Aorta (tissue), 5 donors: ENCODE measurements at regions of chr2 and their contacts with region 1.

Region 1: GRCh38 chr2:205925373-205926337 is 160.3 kb downstream of the INO80D start:
- DNase-seq: peak; percentile 81 to 95
- ATAC-seq: peak; percentile 89
- H3K4me3 ChIP-seq: no peak overlapping the region
- H3K27ac ChIP-seq: no peak overlapping the region
- H3K4me1 ChIP-seq: no peaks in the 10 kb centered on the region
- H3K27me3 ChIP-seq: no peaks in the 10 kb centered on the region

Region 2: GRCh38 chr2:204325468-204325867 is 1600.2 kb before region 1 on chr2:
- intact Hi-C with region 1: loop called in 1 of 2 experiments (anchors 10 kb)
- DNase-seq: no peak
- ATAC-seq: peak; percentile 85
- H3K4me3 ChIP-seq: no peak overlapping the region
- H3K27ac ChIP-seq: no peak overlapping the region
- H3K4me1 ChIP-seq: no peaks in the 10 kb centered on the region
- H3K27me3 ChIP-seq: peaks cover 0 to 1% of the 10 kb centered on the region in 2 donors

Region 3: GRCh38 chr2:205590759-205591158 is 334.9 kb before region 1 on chr2:
- intact Hi-C with region 1: no loop called
- DNase-seq: no peak
- ATAC-seq: no peak
- H3K4me3 ChIP-seq: no peak overlapping the region
- H3K27ac ChIP-seq: no peak overlapping the region
- H3K4me1 ChIP-seq: no peaks in the 10 kb centered on the region
- H3K27me3 ChIP-seq: no peaks in the 10 kb centered on the region

Region 4: DNA sequence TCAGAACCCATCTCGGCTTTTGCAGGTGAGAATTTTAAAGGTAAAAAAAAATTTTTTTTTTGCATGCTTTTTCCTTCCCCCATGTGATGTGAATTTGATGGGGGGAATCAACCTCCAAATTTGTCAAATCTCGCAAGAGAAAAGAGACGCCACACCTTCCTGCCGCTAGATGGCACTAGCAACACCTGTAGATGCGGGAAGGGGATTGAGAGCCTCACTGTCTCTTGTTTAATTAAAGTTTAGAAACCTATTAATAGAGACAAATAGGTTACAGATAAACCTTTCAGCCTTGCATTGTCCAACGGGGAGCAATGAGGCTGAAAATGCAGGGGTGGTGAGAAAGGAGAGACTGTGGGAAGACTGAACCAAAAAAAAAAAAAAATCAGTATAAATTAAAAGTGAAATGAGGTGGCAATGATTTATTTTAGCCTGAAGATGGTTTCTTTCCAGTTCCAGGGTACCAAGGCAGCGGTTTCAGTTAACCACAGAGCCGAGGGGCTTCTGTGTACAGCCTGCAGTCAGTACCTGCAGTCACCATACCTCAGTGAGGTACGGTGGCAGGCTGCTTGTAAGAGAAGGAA is 158.8 kb before region 1 on chr2:
- intact Hi-C with region 1: loop called in 1 of 2 experiments (anchors 5 kb)
- DNase-seq: peak in 1 of 2 donors; percentile 65
- ATAC-seq: peak; percentile 63
- H3K4me3 ChIP-seq: no peak overlapping the region
- H3K27ac ChIP-seq: no peak overlapping the region
- H3K4me1 ChIP-seq: peaks cover 0 to 2% of the 10 kb centered on the region in 2 donors
- H3K27me3 ChIP-seq: no peaks in the 10 kb centered on the region

Region 5: GRCh38 chr2:205776139-205776538 is 149.5 kb before region 1 on chr2:
- intact Hi-C with region 1: loop called in 1 of 2 experiments (anchors 2 kb)
- DNase-seq: peak in 1 of 2 donors; percentile 57
- ATAC-seq: peak; percentile 54
- H3K4me3 ChIP-seq: no peak overlapping the region
- H3K27ac ChIP-seq: no peak overlapping the region
- H3K4me1 ChIP-seq: no peaks in the 10 kb centered on the region
- H3K27me3 ChIP-seq: no peaks in the 10 kb centered on the region

Region 6: GRCh38 chr2:205822578-205822977 is 103.1 kb before region 1 on chr2:
- intact Hi-C with region 1: no loop called
- DNase-seq: no peak
- ATAC-seq: no peak
- H3K4me3 ChIP-seq: no peak overlapping the region
- H3K27ac ChIP-seq: no peak overlapping the region
- H3K4me1 ChIP-seq: no peaks in the 10 kb centered on the region
- H3K27me3 ChIP-seq: no peaks in the 10 kb centered on the region